Naive thymus-derived CD8-positive, alpha-beta T cell (primary cell): ENCODE measurements at regions of chr1 and their contacts with region 1.

Region 1: DNA sequence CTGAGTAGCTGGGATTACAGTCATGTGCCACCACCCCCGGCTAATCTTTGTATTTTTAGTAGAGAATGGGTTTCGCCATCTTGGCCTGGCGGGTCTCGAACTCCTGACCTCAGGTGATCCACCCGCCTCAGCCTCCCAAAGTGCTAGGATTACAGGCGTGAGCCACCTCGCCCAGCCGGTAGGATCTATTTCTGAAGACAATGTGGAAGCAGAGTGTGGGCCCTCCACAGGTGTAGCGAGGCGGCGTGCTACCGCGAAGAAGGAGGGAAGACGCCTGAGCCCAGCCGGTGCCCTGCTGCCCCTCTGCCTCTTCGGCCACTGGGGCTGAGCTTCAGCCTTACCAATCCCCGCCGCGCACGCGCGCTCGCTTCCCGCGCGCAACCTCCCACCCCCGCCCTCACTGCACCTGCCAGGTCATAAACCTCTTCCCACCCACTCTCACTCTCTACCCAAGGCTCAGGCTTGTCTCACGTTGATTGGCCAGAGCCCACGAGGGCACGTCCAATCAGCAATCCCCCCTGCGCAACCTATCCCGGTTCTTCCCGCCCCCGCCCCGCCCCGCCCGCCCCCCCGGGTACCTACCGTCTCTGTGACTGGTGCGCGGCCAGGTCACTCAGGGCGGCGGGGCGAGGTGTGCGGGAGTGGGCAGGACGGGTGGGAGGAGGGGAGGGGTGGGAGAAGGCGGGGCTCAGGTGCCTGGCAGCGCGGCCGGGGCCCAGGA is 409 bp upstream of the HOOK1 start:
- DNase-seq: peak; percentile 77 to 97 (median 90)
- ATAC-seq: peak; percentile 93
- H3K4me3 Mint-ChIP-seq: peak overlapping the region in 1 of 10 donors; percentile 86
- H3K27ac Mint-ChIP-seq: peak overlapping the region in 7 of 10 donors; percentile 72 to 95 (median 86)
- H3K4me1 Mint-ChIP-seq: peaks cover 5 to 7% (median 6%) of the 10 kb centered on the region in 4 donors
- H3K27me3 Mint-ChIP-seq: peaks cover 5 to 19% (median 12%) of the 10 kb centered on the region in 5 donors

Region 2: GRCh38 chr1:59803458-59804038 is 10.8 kb before region 1 on chr1:
- POLR2A ChIA-PET with region 1: interaction called, 10 read pairs
- DNase-seq: no peak
- ATAC-seq: no peak
- H3K4me3 Mint-ChIP-seq: no peak overlapping the region
- H3K27ac Mint-ChIP-seq: no peak overlapping the region
- H3K4me1 Mint-ChIP-seq: no peaks in the 10 kb centered on the region
- H3K27me3 Mint-ChIP-seq: peaks cover 1 to 20% (median 13%) of the 10 kb centered on the region in 5 donors